CD8-positive, alpha-beta T cell (primary cell): ENCODE measurements at regions of chr19 and their contacts with region 1.

Region 1: GRCh38 chr19:39970675-39971379 is at the start of gene PSMC4:
- DNase-seq: peak; percentile 97 to 100 (median 98)
- ATAC-seq: peak; percentile 98
- H3K4me3 ChIP-seq: peak within 1 kb of the TSS; percentile 85 to 87
- H3K4me3 Mint-ChIP-seq: peak within 1 kb of the TSS; percentile 99
- H3K27ac ChIP-seq: peak within 1 kb of the TSS; percentile 94 to 96
- H3K27ac Mint-ChIP-seq: peak within 1 kb of the TSS; percentile 99
- H3K4me1 ChIP-seq: peaks cover 31% of the 10 kb centered on the region
- H3K4me1 Mint-ChIP-seq: peaks cover 51% of the 10 kb centered on the region
- H3K27me3 ChIP-seq: no peaks in the 10 kb centered on the region
- H3K27me3 Mint-ChIP-seq: no peaks in the 10 kb centered on the region
- CTCF ChIP-seq: peak; percentile 82
- total RNA-seq, gene PSMC4: 75.9 to 79.0 TPM

Region 2: GRCh38 chr19:39833464-39834286 is 137.2 kb before region 1 on chr19 and contains the start of gene DYRK1B:
- CTCF ChIA-PET with region 1: interaction called, 3 read pairs
- POLR2A ChIA-PET with region 1: interaction called, 8 read pairs
- intact Hi-C with region 1: loop called in 1 of 2 experiments (anchors 1 kb)
- DNase-seq: peak; percentile 97 to 99 (median 98)
- ATAC-seq: peak; percentile 84
- H3K4me3 ChIP-seq: peak within 1 kb of the TSS; percentile 93 to 99
- H3K4me3 Mint-ChIP-seq: peak within 1 kb of the TSS; percentile 75
- H3K27ac ChIP-seq: peak within 1 kb of the TSS; percentile 96 to 99
- H3K27ac Mint-ChIP-seq: peak within 1 kb of the TSS; percentile 90
- H3K4me1 ChIP-seq: peaks cover 23% of the 10 kb centered on the region
- H3K4me1 Mint-ChIP-seq: peaks cover 28% of the 10 kb centered on the region
- H3K27me3 ChIP-seq: no peaks in the 10 kb centered on the region
- H3K27me3 Mint-ChIP-seq: no peaks in the 10 kb centered on the region
- CTCF ChIP-seq: no peak
- total RNA-seq, gene DYRK1B: 19.0 to 22.6 TPM

Region 3: DNA sequence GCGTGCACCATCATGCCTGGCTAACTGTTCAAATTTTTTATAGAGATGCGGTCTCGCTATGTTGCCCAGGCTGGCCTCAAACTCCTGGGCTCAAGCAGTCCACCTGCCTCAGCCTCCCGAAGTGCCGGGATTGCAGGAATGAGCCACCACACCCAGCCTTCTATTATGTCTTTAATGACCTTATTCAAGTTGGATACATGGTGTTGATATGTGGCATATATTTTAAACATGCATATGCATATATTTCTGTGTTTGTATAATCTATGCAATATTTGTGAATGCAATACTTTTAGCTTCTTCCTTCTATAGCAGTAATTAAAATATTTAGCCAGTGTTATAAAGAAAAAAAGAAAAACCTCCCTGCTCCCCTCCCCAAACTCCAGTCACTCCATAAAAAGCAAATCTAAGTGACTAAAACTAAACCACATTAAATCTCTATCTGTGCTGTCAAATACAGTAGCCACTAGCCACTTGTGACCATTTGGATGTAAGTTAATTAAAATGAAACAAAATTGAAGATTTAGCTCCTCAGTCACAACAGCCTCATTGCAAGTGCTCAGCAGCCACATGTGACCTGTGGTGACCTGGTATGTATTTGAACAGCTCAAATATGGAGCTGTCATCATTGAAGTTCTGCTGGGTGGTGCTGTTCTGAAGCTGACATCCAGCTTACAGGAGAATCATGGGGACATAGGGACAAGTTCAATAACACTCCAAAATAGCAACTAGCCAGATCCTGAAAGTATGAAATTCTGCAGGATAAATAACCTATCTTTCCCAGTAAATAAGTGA is 63.8 kb before region 1 on chr19:
- CTCF ChIA-PET with region 1: interaction called, 25 read pairs
- POLR2A ChIA-PET with region 1: interaction called, 4 read pairs
- intact Hi-C with region 1: loop called (anchors 5 to 10 kb)
- DNase-seq: no peak
- ATAC-seq: no peak
- H3K4me3 ChIP-seq: no peak overlapping the region
- H3K4me3 Mint-ChIP-seq: no peak overlapping the region
- H3K27ac ChIP-seq: no peak overlapping the region
- H3K27ac Mint-ChIP-seq: no peak overlapping the region
- H3K4me1 ChIP-seq: no peaks in the 10 kb centered on the region
- H3K4me1 Mint-ChIP-seq: peaks cover 19% of the 10 kb centered on the region
- H3K27me3 ChIP-seq: no peaks in the 10 kb centered on the region
- H3K27me3 Mint-ChIP-seq: no peaks in the 10 kb centered on the region
- CTCF ChIP-seq: no peak

Region 4: DNA sequence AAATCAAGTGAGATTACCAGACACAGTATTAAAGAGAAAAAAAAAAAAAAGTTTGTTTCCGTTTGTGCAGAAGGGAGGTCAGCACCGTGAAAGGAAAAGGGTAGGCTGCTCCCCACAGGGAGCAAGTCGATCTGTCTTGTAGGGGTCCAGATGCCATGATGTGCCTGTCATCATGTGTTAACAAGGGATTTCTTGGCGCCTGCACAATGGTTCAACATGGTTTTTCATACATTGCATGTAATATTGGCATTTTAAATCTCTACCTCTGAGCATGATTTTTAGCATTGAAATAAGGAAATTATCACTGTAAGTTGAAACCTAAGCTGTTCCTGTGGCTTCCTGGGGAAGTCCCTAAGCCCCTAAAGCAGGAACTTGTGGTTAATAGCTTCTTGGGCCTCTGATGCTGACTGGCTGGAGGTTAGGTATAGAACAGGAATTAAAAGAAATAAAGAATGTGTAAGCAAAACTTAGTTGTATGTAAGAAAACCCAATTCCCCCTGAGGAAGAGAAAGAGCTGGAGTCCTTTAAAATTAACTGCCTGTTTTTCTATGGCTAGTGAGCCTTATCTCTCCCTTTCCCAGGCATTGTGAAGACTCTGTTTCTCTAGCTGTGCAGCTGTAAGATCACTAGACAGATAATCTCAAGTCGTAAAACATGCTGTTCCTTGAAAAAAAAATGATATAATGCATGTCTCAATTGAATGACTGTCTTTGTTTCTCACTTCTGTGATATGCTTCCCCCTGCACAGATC is 29.0 kb before region 1 on chr19:
- CTCF ChIA-PET with region 1: interaction called, 90 read pairs
- POLR2A ChIA-PET with region 1: interaction called, 43 read pairs
- intact Hi-C with region 1: loop called (anchors 1 kb)
- DNase-seq: peak in 8 of 9 experiments; percentile 28 to 93 (median 62)
- ATAC-seq: peak; percentile 79
- H3K4me3 ChIP-seq: peak overlapping the region; percentile 34 to 37
- H3K4me3 Mint-ChIP-seq: peak overlapping the region; percentile 57
- H3K27ac ChIP-seq: peak overlapping the region; percentile 36 to 93
- H3K27ac Mint-ChIP-seq: peak overlapping the region; percentile 80
- H3K4me1 ChIP-seq: peaks cover 71% of the 10 kb centered on the region
- H3K4me1 Mint-ChIP-seq: peaks cover 73% of the 10 kb centered on the region
- H3K27me3 ChIP-seq: no peaks in the 10 kb centered on the region
- H3K27me3 Mint-ChIP-seq: no peaks in the 10 kb centered on the region
- CTCF ChIP-seq: no peak

Region 5: DNA sequence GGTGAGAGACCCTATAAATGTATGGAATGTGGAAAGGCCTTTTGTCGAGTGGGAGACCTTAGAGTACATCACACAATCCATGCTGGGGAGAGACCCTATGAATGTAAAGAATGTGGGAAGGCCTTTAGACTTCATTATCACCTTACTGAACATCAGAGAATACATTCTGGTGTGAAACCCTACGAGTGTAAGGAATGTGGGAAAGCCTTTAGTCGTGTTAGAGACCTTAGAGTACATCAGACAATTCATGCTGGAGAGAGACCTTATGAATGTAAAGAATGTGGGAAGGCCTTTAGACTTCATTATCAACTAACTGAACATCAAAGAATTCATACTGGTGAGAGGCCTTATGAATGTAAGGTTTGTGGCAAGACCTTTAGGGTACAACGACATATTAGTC is 43.2 kb after region 1 on chr19:
- CTCF ChIA-PET with region 1: no interaction called
- POLR2A ChIA-PET with region 1: no interaction called
- intact Hi-C with region 1: no loop called
- DNase-seq: no peak
- ATAC-seq: no peak
- H3K4me3 ChIP-seq: no peak overlapping the region
- H3K4me3 Mint-ChIP-seq: no peak overlapping the region
- H3K27ac ChIP-seq: no peak overlapping the region
- H3K27ac Mint-ChIP-seq: no peak overlapping the region
- H3K4me1 ChIP-seq: no peaks in the 10 kb centered on the region
- H3K4me1 Mint-ChIP-seq: no peaks in the 10 kb centered on the region
- H3K27me3 ChIP-seq: no peaks in the 10 kb centered on the region
- H3K27me3 Mint-ChIP-seq: no peaks in the 10 kb centered on the region
- CTCF ChIP-seq: no peak

Region 6: GRCh38 chr19:40090241-40091204 is 119.7 kb after region 1 on chr19 and contains the start of gene ZNF780A:
- CTCF ChIA-PET with region 1: no interaction called
- POLR2A ChIA-PET with region 1: interaction called, 7 read pairs
- intact Hi-C with region 1: loop called (anchors 1 kb)
- DNase-seq: peak; percentile 55 to 87 (median 79)
- ATAC-seq: peak; percentile 94
- H3K4me3 ChIP-seq: peak within 1 kb of the TSS; percentile 83 to 99
- H3K4me3 Mint-ChIP-seq: peak within 1 kb of the TSS; percentile 100
- H3K27ac ChIP-seq: peak within 1 kb of the TSS; percentile 93 to 98
- H3K27ac Mint-ChIP-seq: peak within 1 kb of the TSS; percentile 100
- H3K4me1 ChIP-seq: peaks cover 24% of the 10 kb centered on the region
- H3K4me1 Mint-ChIP-seq: peaks cover 48% of the 10 kb centered on the region
- H3K27me3 ChIP-seq: peaks cover 0 to 4% of the 10 kb centered on the region in 2 experiments
- H3K27me3 Mint-ChIP-seq: peaks cover 7% of the 10 kb centered on the region
- CTCF ChIP-seq: no peak
- total RNA-seq, gene ZNF780A: 10.6 to 11.6 TPM